Posterior vena cava (tissue), 2 donors: ENCODE measurements at regions of chr1 and their contacts with region 1.

Region 1: DNA sequence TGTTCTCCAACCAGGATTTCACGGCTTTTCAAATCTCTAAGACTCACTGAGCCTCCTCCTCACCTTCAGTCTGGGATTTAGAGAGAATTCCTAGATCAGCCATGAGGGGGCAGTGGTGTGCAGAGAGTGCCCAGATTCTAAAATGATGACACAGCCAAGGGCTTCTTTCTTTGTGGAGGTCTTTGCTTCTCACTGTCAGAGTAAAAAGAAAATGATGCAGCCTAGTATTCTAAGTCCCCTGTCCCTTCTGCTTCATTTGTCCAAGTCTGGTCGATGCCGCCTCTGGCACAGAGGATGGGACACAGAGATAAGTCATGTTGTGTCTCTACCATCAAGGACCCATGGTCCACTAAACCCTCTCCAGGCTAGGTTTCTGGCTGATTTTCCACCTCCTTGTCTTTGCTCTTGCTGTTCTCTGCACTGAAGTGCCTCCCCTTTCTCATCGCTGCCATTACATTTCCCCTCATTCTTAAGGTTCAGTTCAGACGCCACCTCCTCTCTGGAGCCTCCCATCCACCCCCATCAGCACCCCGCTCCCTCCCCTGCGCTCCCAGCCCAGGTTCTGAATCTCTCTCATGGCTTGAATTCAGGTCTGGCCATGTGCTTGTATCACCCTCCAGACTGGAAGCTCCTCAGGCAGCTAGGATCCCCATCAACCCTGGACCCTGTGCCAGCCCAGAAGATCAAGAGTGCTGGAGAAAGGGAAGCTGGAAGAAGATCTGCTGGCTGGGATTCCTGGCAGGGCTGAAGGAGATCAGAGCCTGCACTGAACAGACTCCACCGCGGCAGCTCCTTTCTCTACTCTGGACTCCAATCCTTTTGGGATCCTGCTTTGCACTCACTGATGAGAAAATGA is 12.0 kb upstream of the TINAGL1 start:
- DNase-seq: peak; percentile 77

Region 2: GRCh38 chr1:30888391-30888790 is 676.0 kb before region 1 on chr1:
- intact Hi-C with region 1: no loop called
- DNase-seq: peak; percentile 88

Region 3: DNA sequence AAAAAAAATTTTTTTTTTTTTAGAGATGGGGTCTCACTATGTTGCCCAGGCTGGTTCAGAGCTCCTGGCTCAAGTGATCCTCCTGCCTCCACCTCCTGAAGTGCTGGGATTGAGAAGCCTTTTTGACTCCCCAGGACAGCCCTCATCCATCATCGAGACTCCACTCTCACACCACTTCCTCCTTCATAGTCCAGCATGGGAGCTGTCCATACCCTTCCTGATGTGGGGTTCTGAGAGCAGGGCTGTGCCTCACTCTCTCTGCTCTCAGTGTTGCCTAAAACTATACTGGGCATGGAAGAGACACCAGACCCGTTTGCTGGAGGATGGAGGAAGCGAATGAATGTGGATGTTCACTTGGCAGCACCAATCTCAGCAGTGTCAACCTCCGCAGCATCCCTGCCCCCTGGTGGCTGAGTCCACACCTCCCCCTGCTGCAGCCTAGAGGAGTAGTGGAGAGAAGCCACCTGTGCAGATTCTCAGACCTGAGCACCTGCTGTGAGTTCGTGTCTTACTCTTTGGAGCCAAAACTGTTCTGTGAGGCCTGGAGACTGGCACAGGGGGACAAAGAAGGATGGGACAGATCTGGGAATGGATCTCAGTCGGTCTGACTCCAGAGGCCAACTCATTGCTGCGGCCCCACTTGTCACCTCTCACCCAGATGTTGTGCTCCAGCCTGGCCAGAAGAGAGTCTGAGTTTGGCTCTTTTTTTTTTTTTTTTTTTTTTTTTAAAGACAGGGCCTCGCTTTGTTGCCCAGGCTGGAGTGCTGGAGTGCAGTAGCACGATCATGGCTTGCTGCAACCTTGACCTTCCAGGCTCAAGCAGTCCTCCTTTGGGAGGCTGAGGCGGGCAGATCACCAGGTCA is 29.6 kb after region 1 on chr1:
- intact Hi-C with region 1: loop called (anchors 1 to 2 kb)
- DNase-seq: peak; percentile 93

Region 4: GRCh38 chr1:31617917-31618660 is 53.7 kb after region 1 on chr1:
- intact Hi-C with region 1: loop called in 1 of 2 experiments (anchors 10 kb)
- DNase-seq: peak; percentile 82

Region 5: GRCh38 chr1:31771891-31772668 is 207.7 kb after region 1 on chr1:
- intact Hi-C with region 1: loop called in 1 of 2 experiments (anchors 10 kb)
- DNase-seq: no peak